Psoas muscle (tissue), 8 donors: ENCODE measurements at regions of chr17 and their contacts with region 1.

Region 1: DNA sequence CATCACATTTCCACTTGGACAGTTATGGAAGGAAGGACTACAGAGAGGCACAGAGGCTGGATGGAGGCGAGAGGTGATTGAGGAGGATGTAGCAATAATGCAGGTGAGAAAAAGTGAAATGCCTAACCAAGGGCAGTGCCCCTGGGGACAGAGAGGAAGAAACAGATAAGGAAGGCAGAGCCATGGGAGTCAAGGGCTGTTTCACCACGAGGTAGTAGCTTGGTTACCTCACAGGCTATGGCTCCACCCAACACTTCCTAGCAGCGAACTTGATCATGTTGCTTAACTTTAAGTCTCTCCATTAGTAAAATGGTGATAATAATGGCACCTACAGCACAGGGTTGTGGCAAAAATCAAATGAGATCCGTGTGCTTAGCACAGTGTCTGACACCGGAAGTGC is 83.9 kb downstream of the YPEL2 start:
- DNase-seq: no peak
- ATAC-seq: no peak
- H3K4me3 ChIP-seq: no peak overlapping the region
- H3K27ac ChIP-seq: no peak overlapping the region
- H3K4me1 ChIP-seq: no peaks in the 10 kb centered on the region
- H3K27me3 ChIP-seq: no peaks in the 10 kb centered on the region
- CTCF ChIP-seq: no peak

Region 2: GRCh38 chr17:58991718-58992331 is 423.6 kb before region 1 on chr17:
- intact Hi-C with region 1: no loop called
- DNase-seq: no peak
- ATAC-seq: no peak
- H3K4me3 ChIP-seq: no peak overlapping the region
- H3K27ac ChIP-seq: no peak overlapping the region
- H3K4me1 ChIP-seq: no peaks in the 10 kb centered on the region
- H3K27me3 ChIP-seq: no peaks in the 10 kb centered on the region
- CTCF ChIP-seq: no peak

Region 3: GRCh38 chr17:59366773-59367657 is 48.4 kb before region 1 on chr17:
- intact Hi-C with region 1: no loop called
- DNase-seq: no peak
- ATAC-seq: peak; percentile 70 to 77 (median 74)
- H3K4me3 ChIP-seq: peak overlapping the region; percentile 28
- H3K27ac ChIP-seq: peak overlapping the region; percentile 92
- H3K4me1 ChIP-seq: peaks cover 99% of the 10 kb centered on the region
- H3K27me3 ChIP-seq: no peaks in the 10 kb centered on the region
- CTCF ChIP-seq: no peak

Region 4: GRCh38 chr17:59378458-59379074 is 36.8 kb before region 1 on chr17:
- intact Hi-C with region 1: no loop called
- DNase-seq: no peak
- ATAC-seq: peak; percentile 27 to 42 (median 38)
- H3K4me3 ChIP-seq: peak overlapping the region; percentile 19
- H3K27ac ChIP-seq: peak overlapping the region; percentile 92
- H3K4me1 ChIP-seq: peaks cover 85% of the 10 kb centered on the region
- H3K27me3 ChIP-seq: no peaks in the 10 kb centered on the region
- CTCF ChIP-seq: no peak

Region 5: DNA sequence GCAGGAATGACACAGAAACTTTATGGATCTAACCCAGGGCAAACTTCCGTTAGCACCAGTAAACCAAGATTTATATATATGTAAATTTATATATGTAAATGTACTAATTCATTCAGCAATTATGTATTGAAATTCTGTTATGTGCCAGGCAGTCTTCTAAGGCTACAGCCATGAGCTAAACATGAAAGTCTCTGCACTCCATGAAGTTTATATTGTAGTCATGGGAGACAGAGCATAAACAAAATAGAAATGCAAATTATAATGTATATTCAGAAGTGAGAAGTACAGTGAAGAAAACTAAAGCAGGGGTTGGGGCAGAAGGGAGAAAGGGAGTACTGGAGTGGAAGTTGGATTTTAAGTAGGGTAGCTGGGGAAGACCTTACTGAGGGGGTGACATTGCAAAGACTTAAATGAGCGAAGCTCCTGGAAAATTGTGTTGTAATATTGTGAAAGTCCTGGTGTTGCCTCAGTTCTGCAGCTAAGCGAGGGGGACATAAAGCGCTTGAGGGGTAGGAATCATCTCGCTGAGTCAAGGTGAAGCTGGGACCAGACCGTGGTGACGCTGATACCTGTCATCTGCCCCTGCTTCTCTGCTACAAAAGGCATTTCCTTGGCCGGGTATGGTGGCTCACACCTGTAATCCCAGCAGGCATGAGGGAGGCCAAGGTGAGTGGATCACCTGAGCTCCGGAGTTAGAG is 19.1 kb before region 1 on chr17:
- intact Hi-C with region 1: loop called in 1 of 2 experiments (anchors 1 kb)
- DNase-seq: no peak
- ATAC-seq: no peak
- H3K4me3 ChIP-seq: no peak overlapping the region
- H3K27ac ChIP-seq: peak overlapping the region; percentile 41
- H3K4me1 ChIP-seq: peaks cover 15% of the 10 kb centered on the region
- H3K27me3 ChIP-seq: no peaks in the 10 kb centered on the region
- CTCF ChIP-seq: no peak